Psoas muscle (tissue), 8 donors: ENCODE measurements at regions of chr2 and their contacts with region 1.

Region 1: GRCh38 chr2:32010670-32011484 is at the start of gene MEMO1:
- DNase-seq: peak; percentile 94 to 96
- ATAC-seq: peak; percentile 88 to 93 (median 92)
- H3K4me3 ChIP-seq: peak within 1 kb of the TSS; percentile 98
- H3K27ac ChIP-seq: peak within 1 kb of the TSS; percentile 97
- H3K4me1 ChIP-seq: peaks cover 21% of the 10 kb centered on the region
- H3K27me3 ChIP-seq: no peaks in the 10 kb centered on the region
- CTCF ChIP-seq: no peak
- total RNA-seq, gene MEMO1: 46.1 to 71.6 (median 56.3) TPM

Region 2: DNA sequence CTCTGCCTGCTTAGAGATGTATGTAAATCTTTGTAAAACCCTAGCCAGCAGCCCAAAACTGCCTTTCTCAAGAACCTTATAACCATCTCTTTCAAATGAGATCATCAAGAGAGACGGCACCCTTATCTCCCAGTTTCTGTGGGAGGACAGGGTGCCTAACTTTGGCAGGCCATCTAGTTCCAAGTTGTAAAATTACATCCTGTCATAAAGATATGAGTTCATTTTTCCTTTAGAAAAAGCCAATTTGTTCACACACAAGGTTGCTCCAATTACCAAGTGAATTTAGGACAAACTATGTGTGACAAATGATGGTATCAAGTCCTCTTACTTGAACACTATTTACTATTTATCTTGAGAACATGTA is 65.3 kb before region 1 on chr2:
- intact Hi-C with region 1: loop called in 1 of 2 experiments (anchors 10 kb)
- DNase-seq: no peak
- ATAC-seq: no peak
- H3K4me3 ChIP-seq: no peak overlapping the region
- H3K27ac ChIP-seq: no peak overlapping the region
- H3K4me1 ChIP-seq: peaks cover 29% of the 10 kb centered on the region
- H3K27me3 ChIP-seq: no peaks in the 10 kb centered on the region
- CTCF ChIP-seq: no peak

Region 3: GRCh38 chr2:32063310-32064161 is 52.7 kb after region 1 on chr2 and contains the start of gene SPAST:
- intact Hi-C with region 1: loop called (anchors 2 to 5 kb)
- DNase-seq: peak; percentile 98 to 99
- ATAC-seq: peak; percentile 96 to 98 (median 96)
- H3K4me3 ChIP-seq: peak within 1 kb of the TSS; percentile 74
- H3K27ac ChIP-seq: peak within 1 kb of the TSS; percentile 88
- H3K4me1 ChIP-seq: peaks cover 19% of the 10 kb centered on the region
- H3K27me3 ChIP-seq: no peaks in the 10 kb centered on the region
- CTCF ChIP-seq: peak; percentile 59
- total RNA-seq, gene SPAST: 12.4 to 21.3 (median 16.6) TPM

Region 4: DNA sequence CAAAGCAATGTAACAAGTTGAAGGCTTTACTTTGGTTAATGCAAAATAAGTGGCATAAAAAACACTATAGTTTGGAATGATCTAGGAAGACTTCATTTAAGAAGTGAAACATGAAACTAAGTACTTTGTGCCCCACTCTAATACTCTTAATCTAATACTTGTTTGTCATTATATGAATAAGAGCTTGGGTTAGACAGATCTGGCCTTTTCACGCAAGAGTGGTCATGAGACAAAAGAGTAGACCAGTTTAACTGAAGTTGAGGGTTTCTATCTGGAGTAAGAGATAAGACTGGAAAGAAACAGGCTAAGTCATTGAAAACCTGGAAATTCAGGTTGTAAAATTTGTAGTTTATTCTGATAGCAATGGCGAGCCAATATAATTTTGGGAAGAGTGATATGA is 157.6 kb after region 1 on chr2:
- intact Hi-C with region 1: loop called in 1 of 2 experiments (anchors 10 kb)
- DNase-seq: no peak
- ATAC-seq: no peak
- H3K4me3 ChIP-seq: no peak overlapping the region
- H3K27ac ChIP-seq: no peak overlapping the region
- H3K4me1 ChIP-seq: peaks cover 16% of the 10 kb centered on the region
- H3K27me3 ChIP-seq: no peaks in the 10 kb centered on the region
- CTCF ChIP-seq: no peak